Activated CD8-positive, alpha-beta memory T cell treated with anti-CD3 and anti-CD28 coated beads, Interleukin-2, amount 10 ng/mL, durations not matched to agents 7 days and 5 days (primary cell): ENCODE measurements at regions of chr2 and their contacts with region 1.

Region 1: DNA sequence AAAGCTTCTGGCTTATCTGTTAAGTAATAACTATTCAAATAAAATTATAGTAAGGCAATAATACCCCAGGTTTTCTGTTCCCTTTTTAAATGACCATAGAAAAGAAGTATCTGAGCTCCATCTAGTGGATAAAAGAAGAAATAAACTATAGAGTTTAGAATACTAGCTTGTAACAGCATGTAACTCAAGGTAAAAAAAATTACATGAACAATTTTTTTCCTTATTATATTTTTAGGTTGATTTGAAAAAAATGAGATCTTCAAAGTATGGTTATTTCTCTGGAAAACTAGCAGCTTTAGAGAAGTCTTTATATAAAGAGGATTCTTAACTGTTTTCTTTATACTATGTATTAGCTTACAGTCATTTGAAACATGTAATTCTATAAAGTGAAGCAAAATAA is 58.1 kb downstream of the NCKAP1 start:
- DNase-seq: no peak
- ATAC-seq: no peak
- H3K4me3 Mint-ChIP-seq: no peak overlapping the region
- H3K27ac Mint-ChIP-seq: no peak overlapping the region
- H3K4me1 Mint-ChIP-seq: peaks cover 3% of the 10 kb centered on the region
- H3K27me3 Mint-ChIP-seq: no peaks in the 10 kb centered on the region

Region 2: GRCh38 chr2:182666674-182667314 is 313.3 kb before region 1 on chr2:
- CTCF ChIA-PET with region 1: interaction called, 30 read pairs
- DNase-seq: no peak
- ATAC-seq: peak; percentile 61
- H3K4me3 Mint-ChIP-seq: no peak overlapping the region
- H3K27ac Mint-ChIP-seq: no peak overlapping the region
- H3K4me1 Mint-ChIP-seq: no peaks in the 10 kb centered on the region
- H3K27me3 Mint-ChIP-seq: peaks cover 5% of the 10 kb centered on the region

Region 3: DNA sequence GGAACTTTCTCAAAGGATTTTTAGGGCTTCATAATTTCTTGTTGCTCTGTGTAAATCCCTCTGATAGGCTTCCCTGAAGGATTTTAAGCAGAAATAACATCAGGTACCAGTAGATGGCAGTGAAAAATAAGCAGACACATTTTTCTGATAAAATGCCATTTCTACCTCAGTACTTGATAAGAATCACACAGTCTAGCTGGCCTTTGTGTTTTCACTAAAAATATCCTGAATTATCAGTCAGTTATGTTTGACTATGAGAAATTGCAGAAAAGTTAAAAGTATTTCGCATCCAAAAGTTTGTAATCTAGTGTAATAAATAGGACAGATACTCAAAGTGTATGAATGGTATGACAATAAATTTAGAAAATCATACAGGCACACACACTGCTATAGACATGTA is 195.3 kb before region 1 on chr2:
- CTCF ChIA-PET with region 1: interaction called, 19 read pairs
- DNase-seq: no peak
- ATAC-seq: no peak
- H3K4me3 Mint-ChIP-seq: no peak overlapping the region
- H3K27ac Mint-ChIP-seq: no peak overlapping the region
- H3K4me1 Mint-ChIP-seq: no peaks in the 10 kb centered on the region
- H3K27me3 Mint-ChIP-seq: no peaks in the 10 kb centered on the region

Region 4: GRCh38 chr2:182949572-182950189 is 30.4 kb before region 1 on chr2:
- CTCF ChIA-PET with region 1: interaction called, 14 read pairs
- DNase-seq: peak; percentile 50
- ATAC-seq: peak; percentile 62
- H3K4me3 Mint-ChIP-seq: no peak overlapping the region
- H3K27ac Mint-ChIP-seq: peak overlapping the region; percentile 45
- H3K4me1 Mint-ChIP-seq: peaks cover 54% of the 10 kb centered on the region
- H3K27me3 Mint-ChIP-seq: no peaks in the 10 kb centered on the region